ENCODE measurements at regions of chr11 and their contacts with region 1.

Region 1: DNA sequence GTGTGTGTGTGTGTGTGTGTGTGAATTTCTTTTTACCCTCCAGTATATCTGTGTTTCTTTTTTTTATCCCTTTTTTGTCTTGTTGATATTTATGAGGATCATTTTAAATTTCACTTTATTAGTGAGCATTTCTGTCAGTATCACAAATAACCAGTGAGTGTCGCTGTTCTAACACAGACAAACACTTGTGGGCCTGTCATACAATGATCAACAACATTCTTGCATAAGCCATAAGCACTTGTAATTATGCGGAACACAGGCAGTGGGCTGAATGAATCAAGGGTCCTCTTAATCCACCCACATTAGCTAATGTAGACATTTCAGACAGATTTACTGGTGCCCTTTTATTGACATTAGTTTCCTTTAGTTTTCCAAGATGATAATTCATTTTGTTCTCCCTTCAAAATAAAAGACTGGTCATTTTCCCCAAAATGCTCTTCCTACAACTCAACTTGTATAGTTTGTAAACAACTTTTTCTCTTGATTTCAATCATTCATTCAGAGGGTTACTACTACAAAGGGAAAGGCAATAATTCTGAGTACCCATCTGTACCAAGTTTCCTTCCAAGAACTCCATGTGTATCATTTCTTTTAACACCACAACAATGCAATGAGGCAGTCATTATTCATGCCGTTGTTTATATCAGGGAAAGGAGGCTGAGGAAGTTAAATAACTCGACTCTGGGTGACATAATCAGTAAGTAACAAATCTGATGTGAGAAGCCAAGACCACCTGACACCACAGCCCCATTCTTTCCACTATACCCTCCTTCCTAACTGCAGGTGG is 34.5 kb upstream of the ANO3 start:
- DNase-seq: peak; percentile 6
- ATAC-seq: no peak
- H3K4me3 Mint-ChIP-seq: no peak overlapping the region
- H3K27ac Mint-ChIP-seq: no peak overlapping the region
- H3K4me1 Mint-ChIP-seq: no peaks in the 10 kb centered on the region
- H3K27me3 Mint-ChIP-seq: no peaks in the 10 kb centered on the region

Region 2: GRCh38 chr11:26551186-26551801 is 253.9 kb after region 1 on chr11:
- CTCF ChIA-PET with region 1: no interaction called
- POLR2A ChIA-PET with region 1: no interaction called
- intact Hi-C with region 1: loop called in 1 of 2 experiments (anchors 5 kb)
- DNase-seq: no peak
- ATAC-seq: no peak
- H3K4me3 Mint-ChIP-seq: no peak overlapping the region
- H3K27ac Mint-ChIP-seq: no peak overlapping the region
- H3K4me1 Mint-ChIP-seq: no peaks in the 10 kb centered on the region
- H3K27me3 Mint-ChIP-seq: no peaks in the 10 kb centered on the region

Region 3: GRCh38 chr11:26649884-26650283 is 352.5 kb after region 1 on chr11:
- CTCF ChIA-PET with region 1: interaction called, 3 read pairs
- POLR2A ChIA-PET with region 1: no interaction called
- intact Hi-C with region 1: loop called in 1 of 2 experiments (anchors 1 kb)
- DNase-seq: peak; percentile 54
- ATAC-seq: no peak
- H3K4me3 Mint-ChIP-seq: no peak overlapping the region
- H3K27ac Mint-ChIP-seq: no peak overlapping the region
- H3K4me1 Mint-ChIP-seq: no peaks in the 10 kb centered on the region
- H3K27me3 Mint-ChIP-seq: peaks cover 3% of the 10 kb centered on the region

Region 4: GRCh38 chr11:27158722-27159679 is 861.6 kb after region 1 on chr11:
- CTCF ChIA-PET with region 1: interaction called, 3 read pairs
- POLR2A ChIA-PET with region 1: no interaction called
- intact Hi-C with region 1: loop called in 1 of 2 experiments (anchors 1 kb)
- DNase-seq: peak; percentile 31
- ATAC-seq: no peak
- H3K4me3 Mint-ChIP-seq: no peak overlapping the region
- H3K27ac Mint-ChIP-seq: no peak overlapping the region
- H3K4me1 Mint-ChIP-seq: no peaks in the 10 kb centered on the region
- H3K27me3 Mint-ChIP-seq: peaks cover 9% of the 10 kb centered on the region

Measured in activated CD4-positive, alpha-beta T cell treated with anti-CD3 and anti-CD28 coated beads for 36 hours (primary cell).